ENCODE measurements at regions of chr7 and their contacts with region 1.

Region 1: GRCh38 chr7:151349507-151349853 is 7.9 kb downstream of the NUB1 start:
- DNase-seq: no peak
- H3K4me3 ChIP-seq: no peak overlapping the region
- H3K27ac ChIP-seq: no peak overlapping the region
- H3K4me1 ChIP-seq: peaks cover 0 to 12% (median 4%) of the 10 kb centered on the region in 4 donors
- H3K27me3 ChIP-seq: no peaks in the 10 kb centered on the region
- CTCF ChIP-seq: no peak

Region 2: GRCh38 chr7:151286148-151286547 is 63.3 kb before region 1 on chr7:
- intact Hi-C with region 1: no loop called
- DNase-seq: no peak
- H3K4me3 ChIP-seq: no peak overlapping the region
- H3K27ac ChIP-seq: no peak overlapping the region
- H3K4me1 ChIP-seq: peaks cover 0 to 16% (median 0%) of the 10 kb centered on the region in 4 donors
- H3K27me3 ChIP-seq: peaks cover 0 to 11% of the 10 kb centered on the region in 2 donors
- CTCF ChIP-seq: no peak

Region 3: GRCh38 chr7:151310578-151310977 is 38.9 kb before region 1 on chr7:
- intact Hi-C with region 1: loop called (anchors 5 kb)
- DNase-seq: no peak
- H3K4me3 ChIP-seq: no peak overlapping the region
- H3K27ac ChIP-seq: no peak overlapping the region
- H3K4me1 ChIP-seq: peaks cover 0 to 18% (median 13%) of the 10 kb centered on the region in 4 donors
- H3K27me3 ChIP-seq: peaks cover 0 to 18% of the 10 kb centered on the region in 2 donors
- CTCF ChIP-seq: peak in 1 of 2 experiments; percentile 29

Region 4: GRCh38 chr7:151484971-151485707 is 135.7 kb after region 1 on chr7:
- intact Hi-C with region 1: no loop called
- DNase-seq: no peak
- H3K4me3 ChIP-seq: no peak overlapping the region
- H3K27ac ChIP-seq: peak overlapping the region in 1 of 2 donors; percentile 1
- H3K4me1 ChIP-seq: peaks cover 0 to 40% (median 8%) of the 10 kb centered on the region in 4 donors
- H3K27me3 ChIP-seq: no peaks in the 10 kb centered on the region
- CTCF ChIP-seq: no peak

Region 5: GRCh38 chr7:151592868-151593486 is 243.5 kb after region 1 on chr7:
- intact Hi-C with region 1: no loop called
- DNase-seq: no peak
- H3K4me3 ChIP-seq: no peak overlapping the region
- H3K27ac ChIP-seq: no peak overlapping the region
- H3K4me1 ChIP-seq: peaks cover 0 to 36% (median 14%) of the 10 kb centered on the region in 4 donors
- H3K27me3 ChIP-seq: no peaks in the 10 kb centered on the region
- CTCF ChIP-seq: no peak